Adrenal gland (tissue), 19 donors: ENCODE measurements at regions of chr16 and their contacts with region 1.

Region 1: GRCh38 chr16:2147981-2148671 is at the start of gene RAB26:
- DNase-seq: peak; percentile 87 to 95 (median 93)
- H3K4me3 ChIP-seq: peak within 1 kb of the TSS in 1 of 4 donors; percentile 71
- H3K27ac ChIP-seq: peak within 1 kb of the TSS in 2 of 5 donors; percentile 77 to 79
- H3K4me1 ChIP-seq: peaks cover 11 to 35% of the 10 kb centered on the region in 2 donors
- H3K27me3 ChIP-seq: no peaks in the 10 kb centered on the region
- CTCF ChIP-seq: no peak
- POLR2A ChIP-seq: no peak
- total RNA-seq, gene RAB26: 1.00 to 4.1 (median 1.5) TPM in 7 of 9 donors, not detected in the others

Region 2: GRCh38 chr16:2009789-2010510 is 138.2 kb before region 1 on chr16 and contains the start of gene ZNF598:
- intact Hi-C with region 1: loop called in 1 of 2 experiments (anchors 5 kb)
- DNase-seq: peak; percentile 75 to 85 (median 79)
- H3K4me3 ChIP-seq: peak within 1 kb of the TSS; percentile 42 to 94 (median 84)
- H3K27ac ChIP-seq: peak within 1 kb of the TSS; percentile 62 to 87 (median 84)
- H3K4me1 ChIP-seq: peaks cover 24 to 34% of the 10 kb centered on the region in 2 donors
- H3K27me3 ChIP-seq: no peaks in the 10 kb centered on the region
- CTCF ChIP-seq: peak in 1 of 6 experiments; percentile 5
- POLR2A ChIP-seq: peak; percentile 78 to 87
- total RNA-seq, gene ZNF598: 4.7 to 36.6 (median 27.5) TPM

Region 3: DNA sequence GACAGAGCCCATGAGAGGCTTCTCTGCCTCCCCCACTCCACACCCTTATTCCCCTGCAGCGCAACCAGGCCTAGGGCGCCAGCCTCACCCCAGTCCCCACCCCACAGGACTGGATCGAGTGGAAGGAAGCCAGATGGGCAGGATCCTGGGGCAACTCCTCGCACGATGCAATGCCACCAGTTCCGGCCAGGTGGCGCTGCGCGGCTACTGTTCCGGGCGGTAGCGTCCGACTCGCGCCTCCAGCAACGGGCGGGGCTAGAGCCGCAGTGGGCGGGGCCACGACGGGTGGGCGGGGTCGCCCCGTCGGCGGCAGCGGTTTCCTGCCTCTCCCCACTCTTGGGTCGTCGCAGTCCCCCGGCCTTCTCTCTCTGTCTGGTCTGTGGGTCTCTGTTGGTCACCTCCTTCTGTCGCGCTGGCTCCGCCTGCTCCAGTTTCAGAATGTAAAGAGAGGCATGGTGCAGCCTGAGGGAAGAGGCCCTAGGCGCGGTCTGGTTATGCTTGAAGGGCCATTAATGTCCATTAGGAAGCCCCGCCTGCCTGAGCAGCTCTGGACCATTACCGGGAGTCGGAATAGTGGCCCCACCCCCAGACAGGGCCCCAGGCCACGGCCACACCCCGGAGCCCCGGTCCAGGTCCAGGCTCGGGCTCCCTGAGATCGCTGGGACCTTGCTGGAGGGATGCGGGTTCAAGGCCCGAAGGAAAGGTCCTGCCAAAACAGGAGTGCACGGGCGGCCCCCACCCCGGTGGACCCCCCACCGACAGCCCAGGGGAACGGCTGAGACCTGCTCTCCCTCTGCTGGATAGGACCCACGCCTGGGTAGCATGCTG is 124.8 kb before region 1 on chr16:
- intact Hi-C with region 1: loop called in 1 of 2 experiments (anchors 5 kb)
- DNase-seq: peak; percentile 89 to 96 (median 94)
- H3K4me3 ChIP-seq: peak overlapping the region in 2 of 4 donors; percentile 1 to 29
- H3K27ac ChIP-seq: peak overlapping the region in 3 of 5 donors; percentile 1 to 66 (median 65)
- H3K4me1 ChIP-seq: peaks cover 14 to 37% of the 10 kb centered on the region in 2 donors
- H3K27me3 ChIP-seq: peaks cover 17% of the 10 kb centered on the region
- CTCF ChIP-seq: peak; percentile 93 to 99 (median 98)
- POLR2A ChIP-seq: peak in 1 of 2 donors; percentile 48

Region 4: GRCh38 chr16:2047330-2048115 is 100.6 kb before region 1 on chr16 and contains the starts of genes NTHL1 and TSC2:
- intact Hi-C with region 1: no loop called
- DNase-seq: peak; percentile 96 to 99 (median 97)
- H3K4me3 ChIP-seq: peak within 1 kb of the TSS; percentile 9 to 92 (median 75)
- H3K27ac ChIP-seq: peak within 1 kb of the TSS in 3 of 5 donors; percentile 40 to 81 (median 52)
- H3K4me1 ChIP-seq: peaks cover 6 to 18% of the 10 kb centered on the region in 2 donors
- H3K27me3 ChIP-seq: no peaks in the 10 kb centered on the region
- CTCF ChIP-seq: peak; percentile 17 to 72 (median 34)
- POLR2A ChIP-seq: peak; percentile 22 to 26
- total RNA-seq, gene NTHL1: 7.9 to 35.7 (median 14.9) TPM
- total RNA-seq, gene TSC2: 18.6 to 148 (median 92.0) TPM